CD8-positive, alpha-beta T cell (primary cell): ENCODE measurements at regions of chr17 and their contacts with region 1.

Region 1: DNA sequence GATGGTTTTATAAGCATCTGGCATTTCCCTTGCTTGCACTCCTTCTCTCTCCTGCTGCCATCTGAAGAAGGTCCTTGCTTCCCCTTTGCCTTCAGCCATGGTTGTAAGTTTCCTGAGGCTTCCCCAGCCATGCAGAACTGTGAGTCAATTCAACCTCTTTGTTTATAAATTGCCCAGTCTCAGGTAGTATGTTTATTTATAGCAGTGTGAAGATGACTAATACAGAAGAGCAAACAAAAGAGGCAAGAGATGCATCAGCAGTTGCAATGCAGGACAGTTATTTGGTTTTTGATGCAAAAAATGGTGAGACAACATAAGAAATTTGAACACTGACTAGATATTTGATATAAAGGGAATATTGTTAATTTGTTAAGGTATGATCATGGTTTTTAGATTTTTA is 16.8 kb downstream of the TMEM100 start:
- DNase-seq: no peak
- ATAC-seq: no peak
- H3K4me3 ChIP-seq: no peak overlapping the region
- H3K4me3 Mint-ChIP-seq: no peak overlapping the region
- H3K27ac ChIP-seq: no peak overlapping the region
- H3K27ac Mint-ChIP-seq: no peak overlapping the region
- H3K4me1 ChIP-seq: no peaks in the 10 kb centered on the region
- H3K4me1 Mint-ChIP-seq: no peaks in the 10 kb centered on the region
- H3K27me3 ChIP-seq: no peaks in the 10 kb centered on the region
- H3K27me3 Mint-ChIP-seq: peaks cover 26% of the 10 kb centered on the region
- CTCF ChIP-seq: no peak

Region 2: DNA sequence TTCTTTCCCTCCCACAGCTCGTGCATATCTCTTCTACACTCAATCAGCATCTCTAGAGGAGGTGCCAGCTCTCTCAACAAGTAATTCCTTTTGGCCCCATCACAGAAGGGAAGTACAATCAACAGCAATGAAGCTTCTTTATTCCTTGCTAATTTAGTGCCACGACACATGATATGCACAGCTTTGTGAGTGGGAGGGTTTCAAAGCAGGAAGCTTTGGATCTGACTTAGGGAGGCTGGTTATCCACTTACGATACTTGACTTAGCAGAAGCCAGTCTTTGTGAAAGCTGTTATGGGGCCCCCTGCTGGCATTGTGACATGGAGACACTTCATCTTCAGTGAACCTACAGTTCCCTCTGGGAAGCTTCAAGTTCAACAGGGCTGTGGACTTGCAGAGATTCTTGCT is 64.2 kb before region 1 on chr17:
- CTCF ChIA-PET with region 1: no interaction called
- POLR2A ChIA-PET with region 1: no interaction called
- intact Hi-C with region 1: loop called in 1 of 2 experiments (anchors 10 kb)
- DNase-seq: peak in 3 of 9 experiments; percentile 4 to 22 (median 9)
- ATAC-seq: no peak
- H3K4me3 ChIP-seq: no peak overlapping the region
- H3K4me3 Mint-ChIP-seq: no peak overlapping the region
- H3K27ac ChIP-seq: no peak overlapping the region
- H3K27ac Mint-ChIP-seq: no peak overlapping the region
- H3K4me1 ChIP-seq: no peaks in the 10 kb centered on the region
- H3K4me1 Mint-ChIP-seq: no peaks in the 10 kb centered on the region
- H3K27me3 ChIP-seq: no peaks in the 10 kb centered on the region
- H3K27me3 Mint-ChIP-seq: peaks cover 22% of the 10 kb centered on the region
- CTCF ChIP-seq: no peak

Region 3: GRCh38 chr17:55830699-55831445 is 125.0 kb after region 1 on chr17:
- CTCF ChIA-PET with region 1: no interaction called
- POLR2A ChIA-PET with region 1: no interaction called
- intact Hi-C with region 1: no loop called
- DNase-seq: no peak
- ATAC-seq: no peak
- H3K4me3 ChIP-seq: no peak overlapping the region
- H3K4me3 Mint-ChIP-seq: no peak overlapping the region
- H3K27ac ChIP-seq: no peak overlapping the region
- H3K27ac Mint-ChIP-seq: no peak overlapping the region
- H3K4me1 ChIP-seq: no peaks in the 10 kb centered on the region
- H3K4me1 Mint-ChIP-seq: no peaks in the 10 kb centered on the region
- H3K27me3 ChIP-seq: no peaks in the 10 kb centered on the region
- H3K27me3 Mint-ChIP-seq: no peaks in the 10 kb centered on the region
- CTCF ChIP-seq: no peak